ENCODE measurements at regions of chr9 and their contacts with region 1.

Region 1: DNA sequence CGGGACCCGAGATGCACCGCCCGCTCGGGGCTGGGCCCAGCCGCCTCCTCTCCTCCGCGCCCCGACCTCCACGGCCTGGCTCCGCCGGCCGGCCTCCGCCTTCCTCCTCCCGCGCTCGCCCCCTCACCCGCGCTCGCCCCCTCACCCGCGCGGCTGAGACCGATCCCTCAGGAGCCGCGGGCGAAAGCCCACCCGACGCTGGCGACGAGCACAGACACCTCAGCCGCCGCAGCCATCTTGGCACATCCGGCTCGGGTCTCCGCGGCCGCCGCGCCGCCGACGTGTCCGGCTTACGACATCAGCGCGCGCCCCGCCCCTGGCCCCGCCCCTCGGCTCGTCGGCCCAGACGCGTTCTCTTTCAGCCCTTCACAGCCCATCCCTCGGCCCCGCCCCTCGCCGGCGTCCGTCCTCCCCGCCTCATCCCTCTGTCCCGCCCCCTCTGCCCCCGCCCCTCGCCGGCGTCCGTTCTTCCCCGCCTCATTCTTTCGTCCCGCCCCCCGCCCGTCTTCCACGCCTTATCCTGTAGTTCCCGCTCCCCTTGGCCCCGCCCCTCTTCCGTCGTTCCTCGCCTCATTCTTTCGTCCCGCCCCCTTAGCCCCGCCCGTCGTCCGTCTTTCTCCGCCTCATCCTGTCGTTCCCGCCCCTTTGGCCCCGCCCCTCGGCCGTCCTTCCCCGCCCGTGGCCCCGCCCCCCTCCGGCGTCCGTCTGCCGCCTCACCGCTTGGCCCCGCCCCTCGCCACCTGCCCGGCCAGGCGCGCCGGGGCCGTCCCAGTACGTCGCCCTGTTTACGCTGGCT is at the start of gene SEC16A:
- DNase-seq: peak; percentile 100
- ATAC-seq: peak; percentile 76
- H3K4me3 Mint-ChIP-seq: peak within 1 kb of the TSS; percentile 97
- H3K27ac Mint-ChIP-seq: peak within 1 kb of the TSS; percentile 98
- H3K4me1 Mint-ChIP-seq: peaks cover 35% of the 10 kb centered on the region
- H3K27me3 Mint-ChIP-seq: no peaks in the 10 kb centered on the region
- total RNA-seq, gene SEC16A: 62.7 TPM

Region 2: DNA sequence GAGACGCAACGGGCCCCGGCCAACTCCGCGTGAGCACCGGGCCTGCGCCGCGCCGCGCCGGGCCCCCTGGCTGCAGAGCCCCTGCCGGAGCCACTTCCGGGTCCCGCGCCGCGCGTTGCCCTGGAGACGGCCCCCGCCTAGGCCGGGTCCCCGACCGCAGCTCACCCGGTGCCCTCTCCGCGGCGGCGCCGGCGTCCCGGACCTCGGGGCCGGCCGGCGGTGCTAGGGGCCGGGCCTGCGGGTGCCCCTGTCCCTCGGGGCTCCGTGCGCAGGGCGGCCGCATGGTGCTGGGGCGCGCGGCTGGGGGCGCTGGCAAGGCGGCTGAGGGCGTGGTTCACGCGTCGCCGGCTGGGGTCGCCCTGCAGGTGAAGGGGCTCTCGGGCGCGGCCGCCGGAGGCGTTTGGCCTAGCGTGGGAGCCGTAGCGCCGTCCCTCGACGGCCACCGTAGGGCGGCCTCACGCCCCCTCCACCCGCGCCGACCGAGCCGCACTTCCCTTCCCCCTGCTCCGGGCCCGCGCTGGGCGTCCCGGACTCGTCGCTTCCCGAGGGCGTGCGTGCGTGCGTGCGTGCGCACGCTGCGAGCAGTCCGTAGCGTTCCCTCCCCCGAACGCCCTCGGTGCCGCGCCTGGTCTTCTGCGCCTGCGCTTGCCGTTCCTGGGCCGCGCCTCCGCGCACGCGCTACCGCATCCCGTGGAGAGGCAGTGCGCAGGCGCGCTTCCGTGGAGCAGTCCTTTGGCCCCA is 364.5 kb before region 1 on chr9 and contains the start of gene TMEM250:
- CTCF ChIA-PET with region 1: no interaction called
- POLR2A ChIA-PET with region 1: no interaction called
- intact Hi-C with region 1: loop called in 1 of 2 experiments (anchors 1 kb)
- DNase-seq: peak; percentile 98
- ATAC-seq: peak; percentile 92
- H3K4me3 Mint-ChIP-seq: peak within 1 kb of the TSS; percentile 77
- H3K27ac Mint-ChIP-seq: peak within 1 kb of the TSS; percentile 83
- H3K4me1 Mint-ChIP-seq: peaks cover 21% of the 10 kb centered on the region
- H3K27me3 Mint-ChIP-seq: no peaks in the 10 kb centered on the region
- total RNA-seq, gene TMEM250: 25.4 to 28.8 TPM

Region 3: DNA sequence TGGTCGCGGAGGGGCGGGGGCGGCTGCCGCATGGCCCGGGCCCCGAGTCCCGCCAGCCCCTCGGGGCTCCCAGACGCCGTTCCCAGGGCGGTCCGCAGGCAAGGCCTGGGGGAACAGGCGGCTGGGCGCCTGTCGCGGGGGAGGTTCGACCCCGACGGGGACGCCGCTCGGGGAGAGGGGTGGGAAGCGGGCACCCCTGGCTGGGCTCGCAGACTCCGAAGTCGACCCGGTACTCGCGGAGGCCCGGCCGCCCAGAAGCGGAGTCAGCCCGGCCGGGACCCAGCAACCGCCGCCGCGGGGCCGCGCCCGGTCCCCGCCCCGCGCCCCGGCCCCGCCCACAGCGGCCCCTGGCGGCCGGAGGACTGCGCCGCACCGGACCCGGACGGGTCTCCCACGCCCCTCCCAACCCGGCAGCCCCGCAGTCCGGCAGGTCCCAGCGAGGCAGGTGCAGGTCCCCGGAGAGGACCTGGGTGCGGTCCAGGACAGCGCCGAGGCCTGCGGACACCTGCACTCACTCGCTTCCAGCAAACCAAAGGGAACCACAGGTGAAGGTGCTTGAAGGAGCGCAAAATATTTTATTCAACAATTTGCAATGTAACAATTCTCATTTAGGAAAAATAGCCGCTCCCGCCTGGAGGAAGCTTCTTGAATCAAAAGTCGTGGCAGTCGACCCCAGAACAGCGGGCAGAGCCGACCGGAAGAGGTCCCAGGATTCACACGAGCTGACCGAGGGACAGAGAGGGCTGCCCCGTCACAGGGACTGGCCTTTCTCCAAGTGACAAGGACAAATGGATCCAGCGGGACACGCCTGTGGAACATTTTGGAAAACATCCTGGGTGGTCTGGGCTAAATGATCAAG is 43.2 kb before region 1 on chr9 and contains the start of gene INPP5E:
- CTCF ChIA-PET with region 1: interaction called, 3 read pairs
- POLR2A ChIA-PET with region 1: no interaction called
- intact Hi-C with region 1: loop called (anchors 1 to 2 kb)
- DNase-seq: peak; percentile 89
- ATAC-seq: peak; percentile 85
- H3K4me3 Mint-ChIP-seq: peak within 1 kb of the TSS; percentile 80
- H3K27ac Mint-ChIP-seq: no peak within 1 kb of the TSS
- H3K4me1 Mint-ChIP-seq: peaks cover 21% of the 10 kb centered on the region
- H3K27me3 Mint-ChIP-seq: no peaks in the 10 kb centered on the region
- total RNA-seq, gene INPP5E: 13.5 to 14.1 TPM

Region 4: DNA sequence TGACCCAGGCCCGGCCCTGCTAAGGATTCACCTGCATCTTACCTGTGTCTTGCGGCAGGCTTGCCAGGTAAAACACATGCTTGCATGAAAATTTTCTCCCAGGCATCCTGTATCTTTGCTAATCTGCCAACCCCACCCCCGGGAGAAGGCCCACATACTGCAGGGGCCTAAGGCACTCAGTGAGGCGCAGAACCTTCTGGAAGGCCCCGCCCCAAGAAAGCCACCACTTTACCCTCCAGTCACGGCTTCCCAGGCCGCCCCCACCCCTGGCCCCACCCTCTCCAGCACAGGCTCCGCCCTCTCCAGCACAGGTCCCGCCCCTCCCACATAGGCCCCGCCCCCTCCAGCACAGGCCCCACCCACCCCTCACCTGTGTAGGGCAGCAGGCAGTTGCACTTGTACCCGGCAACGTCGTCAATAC is 29.7 kb after region 1 on chr9:
- CTCF ChIA-PET with region 1: no interaction called
- POLR2A ChIA-PET with region 1: no interaction called
- intact Hi-C with region 1: no loop called
- DNase-seq: peak; percentile 72
- ATAC-seq: peak; percentile 86
- H3K4me3 Mint-ChIP-seq: no peak overlapping the region
- H3K27ac Mint-ChIP-seq: no peak overlapping the region
- H3K4me1 Mint-ChIP-seq: no peaks in the 10 kb centered on the region
- H3K27me3 Mint-ChIP-seq: no peaks in the 10 kb centered on the region

Region 5: DNA sequence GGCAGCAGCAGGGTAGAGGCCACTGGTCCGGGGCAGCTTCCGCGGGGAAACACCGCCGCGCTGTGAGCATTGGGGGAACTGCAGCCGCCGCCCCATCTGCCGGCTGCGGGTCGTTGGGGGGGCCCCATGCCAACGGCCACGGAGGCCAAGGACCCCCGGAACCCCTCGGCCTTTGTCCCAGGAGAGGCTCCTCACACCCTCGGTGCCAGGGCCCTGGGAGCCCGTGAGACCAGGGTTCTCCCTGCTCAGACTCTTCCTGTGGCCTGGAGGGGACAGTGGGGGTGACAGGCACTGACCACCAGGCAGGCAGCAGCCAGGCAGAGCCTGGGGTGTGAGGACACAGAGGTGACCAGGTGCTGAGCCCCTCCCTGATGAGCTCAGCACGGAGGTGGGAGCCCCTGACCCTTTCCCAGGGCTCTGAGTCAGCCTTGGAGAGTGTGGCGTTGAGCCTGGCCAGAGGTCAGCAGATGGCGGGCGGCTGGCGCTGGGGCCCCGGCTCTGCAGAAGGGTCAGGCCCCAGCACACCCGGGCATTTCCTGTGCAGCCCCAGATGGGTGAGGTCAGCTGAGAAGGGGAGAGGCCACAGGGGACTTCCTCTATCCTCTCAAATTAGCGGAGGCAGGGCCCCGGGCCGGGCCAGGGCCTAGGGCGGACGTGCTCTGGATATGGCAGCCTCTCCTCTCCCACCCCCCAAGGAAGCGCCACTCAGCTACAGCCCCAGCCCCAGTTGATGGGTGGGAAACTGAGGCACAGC is 161.8 kb after region 1 on chr9:
- CTCF ChIA-PET with region 1: interaction called, 35 read pairs
- POLR2A ChIA-PET with region 1: no interaction called
- intact Hi-C with region 1: loop called (anchors 1 kb)
- DNase-seq: peak; percentile 87
- ATAC-seq: peak; percentile 98
- H3K4me3 Mint-ChIP-seq: no peak overlapping the region
- H3K27ac Mint-ChIP-seq: no peak overlapping the region
- H3K4me1 Mint-ChIP-seq: no peaks in the 10 kb centered on the region
- H3K27me3 Mint-ChIP-seq: peaks cover 20% of the 10 kb centered on the region

Region 6: GRCh38 chr9:136790927-136791641 is 308.1 kb after region 1 on chr9 and contains the start of gene TMEM141:
- CTCF ChIA-PET with region 1: no interaction called
- POLR2A ChIA-PET with region 1: no interaction called
- intact Hi-C with region 1: loop called in 1 of 2 experiments (anchors 1 kb)
- DNase-seq: peak; percentile 100
- ATAC-seq: peak; percentile 93
- H3K4me3 Mint-ChIP-seq: peak within 1 kb of the TSS; percentile 80
- H3K27ac Mint-ChIP-seq: peak within 1 kb of the TSS; percentile 84
- H3K4me1 Mint-ChIP-seq: peaks cover 20% of the 10 kb centered on the region
- H3K27me3 Mint-ChIP-seq: no peaks in the 10 kb centered on the region
- total RNA-seq, gene TMEM141: 30.9 to 47.1 TPM

Region 7: DNA sequence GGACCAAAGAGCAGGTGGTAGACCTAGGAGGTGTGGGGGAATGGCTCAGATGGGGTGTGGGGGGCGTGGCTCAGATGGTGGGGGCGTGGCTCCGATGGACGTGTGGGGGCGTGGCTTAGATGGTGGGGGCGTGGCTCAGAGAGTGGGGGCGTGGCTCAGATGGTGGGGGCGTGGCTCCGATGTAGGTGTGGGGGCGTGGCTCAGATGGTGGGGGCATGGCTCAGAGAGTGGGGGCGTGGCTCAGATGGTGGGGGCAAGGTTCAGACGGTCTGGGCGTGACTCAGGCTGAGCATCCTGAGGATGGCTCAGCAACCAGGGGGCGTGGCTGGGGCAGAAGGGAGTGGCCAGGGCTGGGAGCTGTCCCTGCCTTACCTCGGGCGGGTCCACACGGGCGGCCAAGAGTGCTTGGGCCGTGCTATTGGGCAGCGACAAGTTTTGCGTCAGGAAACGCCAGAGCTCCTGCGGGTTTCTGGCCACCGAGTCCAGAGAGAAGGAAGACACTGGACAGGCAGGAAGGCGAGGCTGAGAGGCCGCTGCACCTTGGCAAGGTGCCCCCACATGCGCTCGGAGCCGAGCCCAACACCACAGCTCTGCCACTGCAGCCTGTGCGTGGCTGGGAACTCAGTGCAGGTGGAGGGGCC is 539.1 kb after region 1 on chr9:
- CTCF ChIA-PET with region 1: no interaction called
- POLR2A ChIA-PET with region 1: no interaction called
- intact Hi-C with region 1: loop called in 1 of 2 experiments (anchors 1 kb)
- DNase-seq: peak; percentile 93
- ATAC-seq: peak; percentile 97
- H3K4me3 Mint-ChIP-seq: no peak overlapping the region
- H3K27ac Mint-ChIP-seq: no peak overlapping the region
- H3K4me1 Mint-ChIP-seq: peaks cover 3% of the 10 kb centered on the region
- H3K27me3 Mint-ChIP-seq: no peaks in the 10 kb centered on the region

Region 8: GRCh38 chr9:137423004-137423874 is 940.2 kb after region 1 on chr9 and contains the starts of genes EXD3 and NOXA1:
- CTCF ChIA-PET with region 1: no interaction called
- POLR2A ChIA-PET with region 1: no interaction called
- intact Hi-C with region 1: loop called in 1 of 2 experiments (anchors 1 kb)
- DNase-seq: peak; percentile 98
- ATAC-seq: peak; percentile 95
- H3K4me3 Mint-ChIP-seq: peak within 1 kb of the TSS; percentile 82
- H3K27ac Mint-ChIP-seq: peak within 1 kb of the TSS; percentile 66
- H3K4me1 Mint-ChIP-seq: peaks cover 12% of the 10 kb centered on the region
- H3K27me3 Mint-ChIP-seq: no peaks in the 10 kb centered on the region
- total RNA-seq, gene EXD3: 6.7 to 7.1 TPM
- total RNA-seq, gene NOXA1: 0.97 to 1.7 TPM

Measured in activated CD4-positive, alpha-beta T cell treated with anti-CD3 and anti-CD28 coated beads for 36 hours (primary cell).